AG04449 (cell line): ENCODE measurements at regions of chr3 and their contacts with region 1.

Region 1: GRCh38 chr3:189233225-189233858 is 61.6 kb downstream of the TPRG1 start:
- DNase-seq: peak; percentile 14
- H3K4me3 ChIP-seq: no peak overlapping the region
- CTCF ChIP-seq: peak; percentile 76

Region 2: DNA sequence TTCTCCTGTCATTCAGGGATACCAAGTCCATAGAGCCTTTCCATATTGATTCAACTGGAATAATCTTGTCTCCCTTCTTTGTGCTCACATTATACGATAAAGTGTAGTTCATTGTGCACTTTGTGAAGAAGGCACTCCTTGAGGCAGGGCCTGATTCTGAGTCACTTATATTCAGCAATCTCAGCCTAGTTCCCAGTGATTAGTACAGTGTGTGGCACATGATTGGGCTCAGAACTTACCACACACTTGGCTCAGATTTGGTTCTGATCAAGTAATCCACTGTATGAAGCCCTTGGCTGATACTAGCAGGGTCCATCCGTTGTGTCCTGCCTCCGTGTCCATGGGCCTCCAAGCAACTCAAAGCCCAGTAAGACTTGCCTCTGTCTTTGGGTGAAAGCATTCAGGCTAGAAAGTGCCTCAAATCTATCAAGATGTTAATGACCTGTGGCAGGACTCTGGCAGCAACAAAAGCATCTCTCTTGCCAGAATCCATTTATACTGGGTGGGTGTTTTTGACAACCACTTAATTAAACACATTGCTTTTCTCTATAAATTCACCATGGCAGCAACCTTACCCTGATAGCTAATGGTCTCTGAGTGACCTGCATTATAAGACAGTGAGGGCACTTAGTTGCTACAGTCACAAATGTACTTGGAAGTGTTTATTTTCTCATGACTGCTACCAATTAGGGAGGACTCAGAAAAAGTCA is 10.3 kb before region 1 on chr3:
- CTCF ChIA-PET with region 1: interaction called, 18 read pairs
- POLR2A ChIA-PET with region 1: no interaction called
- DNase-seq: no peak
- H3K4me3 ChIP-seq: no peak overlapping the region
- CTCF ChIP-seq: no peak